Activated B cell treated with CpG ODN at 0.5 μM for 24 hours (primary cell): ENCODE measurements at regions of chr20 and their contacts with region 1.

Region 1: GRCh38 chr20:49186535-49187329 is 1.4 kb downstream of the STAU1 start:
- DNase-seq: no peak
- ATAC-seq: peak; percentile 4
- H3K4me3 Mint-ChIP-seq: peak overlapping the region; percentile 85
- H3K27ac Mint-ChIP-seq: peak overlapping the region; percentile 77
- H3K4me1 Mint-ChIP-seq: peaks cover 54% of the 10 kb centered on the region
- H3K27me3 Mint-ChIP-seq: peaks cover 7% of the 10 kb centered on the region
- CTCF ChIP-seq: no peak

Region 2: GRCh38 chr20:49046087-49046900 is 140.4 kb before region 1 on chr20 and contains the start of gene CSE1L:
- CTCF ChIA-PET with region 1: no interaction called
- POLR2A ChIA-PET with region 1: interaction called, 3 read pairs
- intact Hi-C with region 1: loop called (anchors 1 kb)
- DNase-seq: peak; percentile 95
- ATAC-seq: peak; percentile 86
- H3K4me3 Mint-ChIP-seq: peak within 1 kb of the TSS; percentile 97
- H3K27ac Mint-ChIP-seq: peak within 1 kb of the TSS; percentile 94
- H3K4me1 Mint-ChIP-seq: peaks cover 31% of the 10 kb centered on the region
- H3K27me3 Mint-ChIP-seq: no peaks in the 10 kb centered on the region
- CTCF ChIP-seq: no peak
- total RNA-seq, gene CSE1L: 53.2 and 58.8 TPM in 2 replicates

Region 3: GRCh38 chr20:49132995-49133478 is 53.7 kb before region 1 on chr20:
- CTCF ChIA-PET with region 1: no interaction called
- POLR2A ChIA-PET with region 1: no interaction called
- intact Hi-C with region 1: loop called (anchors 10 kb)
- DNase-seq: no peak
- ATAC-seq: no peak
- H3K4me3 Mint-ChIP-seq: no peak overlapping the region
- H3K27ac Mint-ChIP-seq: peak overlapping the region; percentile 30
- H3K4me1 Mint-ChIP-seq: peaks cover 2% of the 10 kb centered on the region
- H3K27me3 Mint-ChIP-seq: no peaks in the 10 kb centered on the region
- CTCF ChIP-seq: no peak

Region 4: GRCh38 chr20:49207076-49207475 is 20.3 kb after region 1 on chr20:
- CTCF ChIA-PET with region 1: interaction called, 4 read pairs
- POLR2A ChIA-PET with region 1: interaction called, 11 read pairs
- intact Hi-C with region 1: no loop called
- DNase-seq: no peak
- ATAC-seq: no peak
- H3K4me3 Mint-ChIP-seq: no peak overlapping the region
- H3K27ac Mint-ChIP-seq: no peak overlapping the region
- H3K4me1 Mint-ChIP-seq: no peaks in the 10 kb centered on the region
- H3K27me3 Mint-ChIP-seq: no peaks in the 10 kb centered on the region
- CTCF ChIP-seq: no peak

Region 5: DNA sequence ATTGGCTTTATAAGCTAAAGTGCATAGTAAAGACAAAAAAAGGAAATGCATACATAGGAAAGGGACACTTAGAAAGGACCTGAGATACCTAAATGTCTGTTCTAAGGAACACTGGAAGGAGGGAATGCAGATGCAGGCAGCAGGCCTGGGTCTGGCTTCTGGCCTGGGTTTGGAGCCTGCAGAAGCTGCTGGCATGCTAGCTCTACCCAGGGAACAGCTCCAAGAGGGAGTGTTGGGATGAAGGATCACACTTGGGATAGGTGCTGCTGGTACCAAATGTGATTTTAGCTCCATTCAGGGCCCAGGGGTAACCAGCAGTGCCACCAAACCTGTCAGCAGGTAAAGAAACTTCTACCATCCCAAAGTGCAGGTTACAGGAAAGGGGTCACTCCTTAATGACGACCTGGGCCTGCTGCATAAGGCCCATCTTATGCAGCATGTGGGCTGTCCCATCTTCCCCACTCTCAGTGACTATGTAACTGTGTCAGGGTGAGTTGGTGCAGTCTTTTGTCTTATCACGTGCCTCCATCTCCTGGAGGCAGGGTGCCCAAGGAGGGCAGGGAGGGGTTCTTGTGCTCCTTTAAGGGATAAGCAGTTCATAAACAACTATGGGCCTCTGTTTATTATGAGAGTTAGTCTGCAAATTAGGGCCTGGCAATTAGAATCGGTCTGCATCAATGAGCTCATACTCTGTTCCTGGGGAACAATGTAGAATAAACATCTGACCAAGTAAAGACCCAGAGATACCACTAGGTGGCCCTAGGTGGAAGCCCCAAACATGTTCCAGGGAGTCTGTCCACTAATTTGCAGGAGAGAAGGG is 59.4 kb after region 1 on chr20:
- CTCF ChIA-PET with region 1: no interaction called
- POLR2A ChIA-PET with region 1: interaction called, 12 read pairs
- intact Hi-C with region 1: no loop called
- DNase-seq: no peak
- ATAC-seq: peak; percentile 71
- H3K4me3 Mint-ChIP-seq: no peak overlapping the region
- H3K27ac Mint-ChIP-seq: peak overlapping the region; percentile 50
- H3K4me1 Mint-ChIP-seq: no peaks in the 10 kb centered on the region
- H3K27me3 Mint-ChIP-seq: no peaks in the 10 kb centered on the region
- CTCF ChIP-seq: no peak

Region 6: GRCh38 chr20:49262444-49262843 is 75.7 kb after region 1 on chr20:
- CTCF ChIA-PET with region 1: no interaction called
- POLR2A ChIA-PET with region 1: no interaction called
- intact Hi-C with region 1: no loop called
- DNase-seq: no peak
- ATAC-seq: no peak
- H3K4me3 Mint-ChIP-seq: no peak overlapping the region
- H3K27ac Mint-ChIP-seq: no peak overlapping the region
- H3K4me1 Mint-ChIP-seq: peaks cover 18% of the 10 kb centered on the region
- H3K27me3 Mint-ChIP-seq: no peaks in the 10 kb centered on the region
- CTCF ChIP-seq: no peak